ENCODE measurements at regions of chr15 and their contacts with region 1.

Region 1: DNA sequence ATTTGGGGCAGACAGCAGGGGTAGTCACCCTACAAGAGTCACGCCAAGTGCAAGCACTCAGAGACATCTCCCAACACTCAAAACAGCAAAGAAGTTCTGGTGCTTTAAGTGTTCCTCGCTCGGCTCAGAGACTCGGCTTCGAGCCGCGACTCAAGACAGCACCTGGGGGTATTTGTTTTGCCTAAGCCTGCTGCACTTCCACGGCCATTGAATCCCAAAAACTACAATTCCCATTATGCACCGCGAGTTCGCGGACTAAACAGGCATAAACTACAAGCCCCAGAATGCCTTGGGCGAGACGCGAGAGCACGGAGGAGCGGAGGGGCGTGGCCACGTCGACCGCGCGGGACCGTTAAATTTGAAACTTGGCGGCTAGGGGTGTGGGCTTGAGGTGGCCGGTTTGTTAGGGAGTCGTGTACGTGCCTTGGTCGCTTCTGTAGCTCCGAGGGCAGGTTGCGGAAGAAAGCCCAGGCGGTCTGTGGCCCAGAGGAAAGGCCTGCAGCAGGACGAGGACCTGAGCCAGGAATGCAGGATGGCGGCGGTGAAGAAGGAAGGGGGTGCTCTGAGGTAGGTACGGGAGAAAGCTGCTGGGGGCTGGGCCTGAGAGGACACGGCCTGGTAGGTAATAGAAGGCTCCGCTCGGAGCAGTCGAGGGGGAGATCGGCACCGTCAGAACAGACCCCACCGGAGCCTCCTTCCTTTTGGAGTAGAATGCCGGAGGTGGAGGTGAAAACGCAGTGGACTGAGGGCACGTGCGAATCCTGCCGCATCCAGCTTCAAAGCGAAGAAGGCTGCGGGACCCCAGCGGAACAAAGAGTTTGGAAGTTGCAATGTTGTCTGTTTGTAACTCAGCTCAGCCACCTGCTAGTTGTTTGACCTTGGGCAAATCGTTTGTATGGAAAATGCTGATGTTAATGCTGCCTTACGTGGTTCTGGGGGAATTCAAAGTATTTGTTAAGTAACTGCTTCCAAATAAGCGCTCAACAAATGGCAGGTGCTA is at the start of gene BUB1B:
- DNase-seq: peak; percentile 93
- H3K4me3 Mint-ChIP-seq: no peak within 1 kb of the TSS
- H3K27ac Mint-ChIP-seq: no peak within 1 kb of the TSS
- H3K4me1 Mint-ChIP-seq: peaks cover 10% of the 10 kb centered on the region
- H3K27me3 Mint-ChIP-seq: no peaks in the 10 kb centered on the region
- total RNA-seq, gene BUB1B: 71.0 and 76.1 TPM in 2 replicates

Region 2: GRCh38 chr15:39512643-39513042 is 648.3 kb before region 1 on chr15:
- intact Hi-C with region 1: no loop called
- DNase-seq: no peak
- H3K4me3 Mint-ChIP-seq: no peak overlapping the region
- H3K27ac Mint-ChIP-seq: no peak overlapping the region
- H3K4me1 Mint-ChIP-seq: no peaks in the 10 kb centered on the region
- H3K27me3 Mint-ChIP-seq: peaks cover 9% of the 10 kb centered on the region

Region 3: GRCh38 chr15:40197434-40197833 is 36.4 kb after region 1 on chr15:
- intact Hi-C with region 1: loop called (anchors 5 kb)
- DNase-seq: no peak
- H3K4me3 Mint-ChIP-seq: peak overlapping the region; percentile 55
- H3K27ac Mint-ChIP-seq: peak overlapping the region; percentile 46
- H3K4me1 Mint-ChIP-seq: peaks cover 49% of the 10 kb centered on the region
- H3K27me3 Mint-ChIP-seq: no peaks in the 10 kb centered on the region

Measured in activated T-helper 1 cell treated with anti-CD3 and anti-CD28 coated beads, Interleukin-12 subunit alpha, Interleukin-12 subunit beta, Interleukin-2, Interleukin-4 antibody, amounts not matched to agents 30 ng/mL and 10 ng/mL and 1 ng/mL, durations not matched to agents 14 hours and 24 hours and 36 hours (primary cell).